ENCODE measurements at regions of chr6 and their contacts with region 1.

Region 1: GRCh38 chr6:111709615-111710398 is 104.1 kb upstream of the TRAF3IP2 start:
- DNase-seq: peak in 1 of 2 experiments; percentile 57
- H3K4me3 ChIP-seq: no peak overlapping the region
- H3K4me3 Mint-ChIP-seq: no peak overlapping the region
- H3K27ac Mint-ChIP-seq: no peak overlapping the region
- H3K4me1 ChIP-seq: no peaks in the 10 kb centered on the region
- H3K4me1 Mint-ChIP-seq: no peaks in the 10 kb centered on the region
- H3K27me3 ChIP-seq: no peaks in the 10 kb centered on the region
- H3K27me3 Mint-ChIP-seq: no peaks in the 10 kb centered on the region
- CTCF ChIP-seq: peak; percentile 42 to 57

Region 2: DNA sequence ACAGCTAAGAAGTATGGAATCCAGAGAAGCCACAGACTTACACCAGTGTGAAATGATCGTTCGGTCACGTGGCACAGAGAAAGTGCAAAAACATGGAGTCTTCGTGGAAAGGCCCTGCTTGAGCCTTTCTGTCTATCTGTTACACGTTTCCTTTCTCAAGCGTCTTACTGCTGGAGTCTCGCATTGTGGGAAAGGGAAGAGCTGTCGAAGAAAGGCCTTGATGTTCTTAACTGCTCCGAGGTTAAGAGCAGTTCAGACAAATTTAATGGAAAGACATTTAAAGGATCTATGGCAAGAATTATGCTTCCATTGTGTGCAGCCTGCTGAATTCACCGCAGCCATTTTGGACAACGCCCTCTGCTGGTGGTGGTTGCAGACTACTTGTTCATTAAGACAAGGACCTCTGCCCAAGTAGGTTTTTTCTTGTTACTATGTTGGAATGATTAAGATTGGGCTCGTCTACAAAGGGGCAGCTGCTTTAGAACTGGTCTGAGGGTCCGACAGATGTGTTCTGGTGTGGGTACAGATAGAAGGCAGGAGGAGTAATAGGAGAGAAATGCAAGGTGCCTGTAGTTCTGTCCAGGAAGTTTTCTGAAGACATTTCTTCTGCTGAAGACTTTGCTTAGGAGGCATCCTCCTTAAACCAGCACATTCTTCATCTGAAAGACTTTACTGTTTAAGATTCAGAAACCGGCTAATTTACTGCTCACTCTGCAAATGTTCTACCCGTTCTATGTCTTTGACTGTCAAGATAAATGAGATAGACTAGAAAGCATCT is 319.4 kb after region 1 on chr6:
- CTCF ChIA-PET with region 1: no interaction called
- POLR2A ChIA-PET with region 1: no interaction called
- intact Hi-C with region 1: loop called (anchors 1 kb)
- DNase-seq: peak; percentile 59 to 68
- H3K4me3 ChIP-seq: no peak overlapping the region
- H3K4me3 Mint-ChIP-seq: no peak overlapping the region
- H3K27ac Mint-ChIP-seq: no peak overlapping the region
- H3K4me1 ChIP-seq: no peaks in the 10 kb centered on the region
- H3K4me1 Mint-ChIP-seq: no peaks in the 10 kb centered on the region
- H3K27me3 ChIP-seq: no peaks in the 10 kb centered on the region
- H3K27me3 Mint-ChIP-seq: peaks cover 4% of the 10 kb centered on the region
- CTCF ChIP-seq: peak; percentile 65 to 68

Region 3: DNA sequence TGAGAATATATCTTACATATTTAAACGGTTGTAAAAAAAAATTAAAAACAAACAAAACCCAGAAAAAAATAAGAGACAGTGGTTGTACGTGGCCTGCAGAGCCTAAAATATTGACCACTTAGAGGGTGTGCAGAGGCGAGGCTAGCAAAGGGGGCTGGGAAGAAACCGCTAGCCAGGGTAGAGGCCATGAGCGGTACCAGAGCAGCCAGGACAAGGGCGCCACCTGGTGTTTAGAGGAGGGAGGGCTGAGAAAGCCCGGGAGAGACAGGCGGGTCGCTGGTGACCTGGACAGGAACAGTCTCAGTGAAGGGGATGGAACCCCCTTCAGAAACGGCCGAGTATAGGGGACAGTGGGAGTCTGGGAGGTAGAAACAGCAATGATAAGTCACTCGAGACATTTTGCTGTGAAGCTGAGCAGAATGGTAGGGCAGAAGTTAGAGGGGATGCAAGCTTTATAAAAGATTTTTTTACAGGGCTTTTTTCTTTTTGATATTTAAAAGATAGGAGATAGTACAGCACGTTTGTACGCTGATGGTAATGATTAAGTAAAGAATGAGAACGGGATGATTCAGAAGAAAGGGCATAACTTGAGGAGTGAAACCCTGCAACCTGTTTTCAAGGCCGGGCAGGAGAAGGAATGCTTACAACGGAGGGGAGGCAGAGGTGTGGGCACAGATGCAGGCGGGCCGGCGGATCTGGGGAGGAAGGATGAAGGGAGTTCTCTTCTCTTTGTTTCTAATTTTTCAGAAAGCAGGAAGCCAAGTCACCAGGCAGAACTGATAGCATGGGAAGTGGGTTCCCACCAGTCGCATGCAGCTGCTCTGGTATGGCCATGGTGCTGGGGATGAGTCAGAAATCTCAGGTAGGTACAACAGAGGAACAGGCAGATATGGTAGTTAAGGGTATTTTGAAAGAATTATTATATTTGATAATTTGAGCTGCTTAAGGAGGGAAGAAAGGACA is 453.8 kb after region 1 on chr6:
- CTCF ChIA-PET with region 1: no interaction called
- POLR2A ChIA-PET with region 1: no interaction called
- intact Hi-C with region 1: loop called (anchors 1 kb)
- DNase-seq: peak; percentile 68 to 80
- H3K4me3 ChIP-seq: no peak overlapping the region
- H3K4me3 Mint-ChIP-seq: no peak overlapping the region
- H3K27ac Mint-ChIP-seq: no peak overlapping the region
- H3K4me1 ChIP-seq: no peaks in the 10 kb centered on the region
- H3K4me1 Mint-ChIP-seq: no peaks in the 10 kb centered on the region
- H3K27me3 ChIP-seq: no peaks in the 10 kb centered on the region
- H3K27me3 Mint-ChIP-seq: peaks cover 31% of the 10 kb centered on the region
- CTCF ChIP-seq: peak; percentile 82 to 94